ENCODE measurements at regions of chr14 and their contacts with region 1.

Region 1: GRCh38 chr14:72904840-72905561 is 11.1 kb upstream of the DPF3 start:
- H3K4me3 ChIP-seq: no peak overlapping the region
- H3K27ac ChIP-seq: no peak overlapping the region
- H3K4me1 ChIP-seq: peaks cover 4% of the 10 kb centered on the region; the same call in 1 of the 2 replicates
- CTCF ChIP-seq: peak; percentile 47; the same call in 1 of the 2 replicates

Region 2: GRCh38 chr14:72516936-72517700 is 387.9 kb before region 1 on chr14:
- CTCF ChIA-PET with region 1: interaction called, 158 read pairs
- POLR2A ChIA-PET with region 1: no interaction called
- H3K4me3 ChIP-seq: no peak overlapping the region
- H3K27ac ChIP-seq: no peak overlapping the region
- H3K4me1 ChIP-seq: no peaks in the 10 kb centered on the region
- CTCF ChIP-seq: peak; percentile 65

Region 3: DNA sequence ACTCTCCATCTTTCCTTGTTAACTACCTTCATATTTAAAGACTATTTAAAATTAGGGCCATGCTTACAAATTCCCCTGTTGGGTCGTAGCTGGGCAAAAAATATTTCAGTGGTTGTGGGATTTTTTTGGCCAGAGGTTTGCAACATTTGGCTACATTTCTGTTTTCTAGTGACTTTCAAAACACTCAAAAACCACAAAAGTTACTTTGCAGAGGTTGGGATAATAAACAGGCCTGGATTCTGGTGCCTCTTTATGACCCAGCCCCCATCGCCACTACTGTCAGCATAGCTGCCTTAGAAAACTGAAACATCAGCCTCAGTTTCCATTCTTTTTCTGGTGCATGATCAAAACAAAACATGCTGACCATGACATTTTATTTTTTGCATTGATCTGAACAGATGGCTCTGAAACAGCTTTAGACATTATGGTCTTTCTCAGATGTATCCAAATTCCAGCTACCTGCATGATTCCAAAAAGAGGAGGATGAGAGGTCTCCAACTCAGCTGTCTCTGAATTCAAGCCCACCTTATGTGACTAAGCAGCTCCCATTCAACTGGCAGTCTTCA is 16.3 kb before region 1 on chr14:
- CTCF ChIA-PET with region 1: interaction called, 12 read pairs
- POLR2A ChIA-PET with region 1: no interaction called
- H3K4me3 ChIP-seq: no peak overlapping the region
- H3K27ac ChIP-seq: no peak overlapping the region
- H3K4me1 ChIP-seq: peaks cover 11% of the 10 kb centered on the region
- CTCF ChIP-seq: no peak

Region 4: GRCh38 chr14:72893636-72894321 is 11.2 kb before region 1 on chr14 and contains the start of gene DPF3:
- CTCF ChIA-PET with region 1: interaction called, 12 read pairs
- POLR2A ChIA-PET with region 1: no interaction called
- H3K4me3 ChIP-seq: peak within 1 kb of the TSS; percentile 81
- H3K27ac ChIP-seq: peak within 1 kb of the TSS; percentile 48; the same call in 1 of the 2 replicates
- H3K4me1 ChIP-seq: 0 out of 2 replicates have a peak, but pooled peaks cover 5% of the 10 kb centered on the region
- CTCF ChIP-seq: no peak

Region 5: GRCh38 chr14:72916177-72916576 is 11.2 kb after region 1 on chr14:
- CTCF ChIA-PET with region 1: interaction called, 17 read pairs
- POLR2A ChIA-PET with region 1: interaction called, 4 read pairs
- H3K4me3 ChIP-seq: no peak overlapping the region
- H3K27ac ChIP-seq: no peak overlapping the region
- H3K4me1 ChIP-seq: no peaks in the 10 kb centered on the region
- CTCF ChIP-seq: no peak

Region 6: GRCh38 chr14:72948481-72949138 is 43.6 kb after region 1 on chr14:
- CTCF ChIA-PET with region 1: interaction called, 10 read pairs
- POLR2A ChIA-PET with region 1: no interaction called
- H3K4me3 ChIP-seq: no peak overlapping the region
- H3K27ac ChIP-seq: no peak overlapping the region
- H3K4me1 ChIP-seq: no peaks in the 10 kb centered on the region
- CTCF ChIP-seq: peak; percentile 27; the same call in 1 of the 2 replicates